ENCODE measurements at regions of chr15 and their contacts with region 1.

Region 1: GRCh38 chr15:62060113-62060895 is at the start of gene VPS13C:
- DNase-seq: peak; percentile 95
- H3K4me3 Mint-ChIP-seq: peak within 1 kb of the TSS; percentile 88
- H3K27ac Mint-ChIP-seq: peak within 1 kb of the TSS; percentile 90
- H3K4me1 Mint-ChIP-seq: peaks cover 42% of the 10 kb centered on the region
- H3K27me3 Mint-ChIP-seq: peaks cover 2% of the 10 kb centered on the region
- total RNA-seq, gene VPS13C: 44.6 to 52.4 TPM

Region 2: DNA sequence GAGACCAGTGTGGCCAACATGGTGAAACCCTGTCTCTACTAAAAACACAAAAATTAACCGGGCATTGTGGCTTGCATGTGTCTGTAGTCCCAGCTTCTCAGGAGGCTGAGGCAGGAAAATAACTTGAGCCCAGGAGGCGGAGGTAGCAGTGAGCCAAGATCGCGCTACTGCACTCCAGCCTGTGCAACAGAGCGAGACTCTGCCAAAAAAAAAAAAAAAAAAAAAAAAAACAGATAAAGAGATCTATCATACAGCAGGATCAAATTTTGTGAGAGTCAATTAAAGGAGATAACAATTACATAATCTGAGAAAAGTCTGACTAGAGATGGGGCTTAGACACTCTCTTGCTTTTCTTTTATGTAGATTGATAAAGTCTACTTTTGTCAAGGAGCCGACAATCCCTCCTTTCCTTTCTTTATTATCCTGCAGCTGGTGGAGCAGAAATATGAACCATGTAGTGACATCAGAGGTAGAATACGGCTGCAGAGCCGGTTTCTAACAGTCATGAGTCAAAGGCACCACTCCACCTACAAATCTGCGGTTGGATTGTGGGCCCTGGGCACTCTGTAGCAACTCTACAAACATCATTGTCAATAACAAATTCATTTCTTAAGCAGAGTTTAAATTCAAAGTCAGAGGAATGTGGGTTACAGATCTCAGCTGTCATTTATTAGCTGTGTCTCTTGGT is 15.4 kb after region 1 on chr15:
- CTCF ChIA-PET with region 1: interaction called, 43 read pairs
- POLR2A ChIA-PET with region 1: interaction called, 3 read pairs
- intact Hi-C with region 1: no loop called
- DNase-seq: no peak
- H3K4me3 Mint-ChIP-seq: no peak overlapping the region
- H3K27ac Mint-ChIP-seq: no peak overlapping the region
- H3K4me1 Mint-ChIP-seq: no peaks in the 10 kb centered on the region
- H3K27me3 Mint-ChIP-seq: peaks cover 1% of the 10 kb centered on the region

Region 3: DNA sequence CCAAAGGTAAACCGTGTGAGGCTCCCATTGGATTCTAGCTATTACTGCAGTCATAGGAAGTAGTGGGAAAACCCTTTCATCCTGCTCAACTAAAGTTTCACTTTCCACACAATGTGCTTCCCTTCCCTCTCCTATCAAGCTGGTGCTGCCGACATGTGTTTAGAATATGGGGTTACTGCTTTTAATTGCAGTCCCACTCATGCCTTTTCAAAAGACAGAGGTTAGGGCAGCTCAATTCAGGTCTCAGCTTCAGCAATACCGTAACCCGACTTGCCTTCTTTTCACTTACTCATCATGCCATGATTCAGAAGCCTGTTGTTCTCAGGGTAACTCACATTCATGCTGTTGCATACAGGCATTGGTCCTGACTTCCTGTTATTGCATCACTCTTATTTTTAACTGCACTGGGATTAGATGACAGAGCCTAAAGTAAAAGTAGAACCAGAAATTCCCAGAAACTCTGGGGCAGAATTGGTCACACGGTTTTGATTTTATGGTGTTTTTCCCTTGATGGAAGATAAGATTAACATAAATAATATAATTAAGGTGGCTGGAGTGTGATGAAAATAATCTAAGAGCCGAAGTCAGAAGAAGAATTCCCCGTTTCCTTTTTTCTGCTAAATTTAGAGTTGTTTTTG is 59.0 kb after region 1 on chr15:
- CTCF ChIA-PET with region 1: interaction called, 19 read pairs
- POLR2A ChIA-PET with region 1: interaction called, 5 read pairs
- intact Hi-C with region 1: loop called (anchors 1 kb)
- DNase-seq: peak; percentile 43
- H3K4me3 Mint-ChIP-seq: peak overlapping the region; percentile 24
- H3K27ac Mint-ChIP-seq: peak overlapping the region; percentile 89
- H3K4me1 Mint-ChIP-seq: peaks cover 52% of the 10 kb centered on the region
- H3K27me3 Mint-ChIP-seq: no peaks in the 10 kb centered on the region

Region 4: GRCh38 chr15:62212741-62213140 is 152.4 kb after region 1 on chr15:
- CTCF ChIA-PET with region 1: no interaction called
- POLR2A ChIA-PET with region 1: no interaction called
- intact Hi-C with region 1: no loop called
- DNase-seq: peak; percentile 19
- H3K4me3 Mint-ChIP-seq: no peak overlapping the region
- H3K27ac Mint-ChIP-seq: no peak overlapping the region
- H3K4me1 Mint-ChIP-seq: peaks cover 10% of the 10 kb centered on the region
- H3K27me3 Mint-ChIP-seq: peaks cover 6% of the 10 kb centered on the region

Measured in activated CD4-positive, alpha-beta memory T cell treated with anti-CD3 and anti-CD28 coated beads for 36 hours (primary cell).